Mucosa of descending colon (tissue), 3 donors: ENCODE measurements at regions of chr3 and their contacts with region 1.

Region 1: GRCh38 chr3:193946945-193947344 is 189.0 kb upstream of the HES1 start:
- DNase-seq: no peak
- ATAC-seq: peak; percentile 63
- H3K4me3 ChIP-seq: no peak overlapping the region
- H3K4me1 ChIP-seq: no peaks in the 10 kb centered on the region
- CTCF ChIP-seq: no peak

Region 2: DNA sequence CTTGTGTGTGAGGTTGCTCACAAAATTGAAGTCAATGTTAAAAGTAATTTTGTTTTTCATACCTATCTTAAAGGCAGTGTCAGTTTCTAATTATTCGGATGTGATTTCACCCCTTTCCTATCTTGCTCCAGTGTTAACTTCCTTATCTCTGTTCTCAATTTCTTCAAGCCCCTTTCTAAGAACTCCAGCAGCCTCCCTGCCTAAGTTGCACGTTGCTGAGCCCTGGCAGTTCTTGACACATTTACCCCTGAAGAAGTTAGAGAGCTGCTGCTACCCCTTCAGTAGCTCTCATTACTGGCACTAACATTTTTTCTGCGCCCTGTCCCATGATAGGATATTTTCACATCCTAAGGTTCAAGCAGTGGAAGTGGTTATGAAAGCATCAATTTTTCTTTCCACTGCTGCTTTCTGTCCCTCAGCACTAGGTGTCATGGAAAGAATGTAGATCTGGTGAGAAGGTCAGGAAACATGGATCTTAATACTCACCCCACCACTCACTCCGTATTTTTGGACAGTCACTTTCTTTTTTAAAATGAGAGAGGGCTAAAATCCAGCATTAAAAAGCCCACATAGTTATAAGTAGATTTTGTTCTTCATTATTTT is 291.0 kb before region 1 on chr3:
- intact Hi-C with region 1: no loop called
- DNase-seq: no peak
- ATAC-seq: no peak
- H3K4me3 ChIP-seq: no peak overlapping the region
- H3K4me1 ChIP-seq: no peaks in the 10 kb centered on the region
- CTCF ChIP-seq: no peak

Region 3: DNA sequence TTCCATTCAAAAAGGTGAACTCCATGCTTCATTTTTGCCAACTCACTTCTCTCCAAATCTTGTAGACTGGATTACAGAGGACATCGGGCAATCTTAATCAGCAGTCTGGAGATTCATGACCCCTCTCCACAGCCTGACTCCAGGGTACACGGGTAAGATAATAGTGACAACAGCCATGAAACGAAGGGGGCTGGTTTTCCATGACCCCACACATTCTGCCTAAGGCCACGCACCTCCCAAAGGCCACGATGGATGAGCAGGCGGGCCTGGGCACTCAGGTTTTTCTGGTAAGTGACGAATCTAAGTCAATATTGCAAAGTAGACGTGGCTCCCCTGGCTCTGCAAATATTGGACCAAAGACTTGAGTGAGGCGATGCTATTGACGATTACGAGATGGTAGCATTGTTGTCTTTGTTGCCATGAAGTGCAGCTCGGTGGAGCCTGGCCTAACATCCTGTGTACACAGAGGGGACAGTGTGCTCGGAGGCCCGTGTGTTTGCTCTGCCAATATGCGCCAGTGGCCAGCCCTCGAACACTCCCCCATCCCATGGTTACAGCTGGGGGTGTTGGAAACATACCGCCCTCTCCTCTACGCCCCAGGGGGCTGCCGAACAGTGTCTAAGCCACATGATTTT is 234.9 kb before region 1 on chr3:
- intact Hi-C with region 1: loop called in 1 of 2 experiments (anchors 10 kb)
- DNase-seq: no peak
- ATAC-seq: no peak
- H3K4me3 ChIP-seq: no peak overlapping the region
- H3K4me1 ChIP-seq: no peaks in the 10 kb centered on the region
- CTCF ChIP-seq: no peak

Region 4: DNA sequence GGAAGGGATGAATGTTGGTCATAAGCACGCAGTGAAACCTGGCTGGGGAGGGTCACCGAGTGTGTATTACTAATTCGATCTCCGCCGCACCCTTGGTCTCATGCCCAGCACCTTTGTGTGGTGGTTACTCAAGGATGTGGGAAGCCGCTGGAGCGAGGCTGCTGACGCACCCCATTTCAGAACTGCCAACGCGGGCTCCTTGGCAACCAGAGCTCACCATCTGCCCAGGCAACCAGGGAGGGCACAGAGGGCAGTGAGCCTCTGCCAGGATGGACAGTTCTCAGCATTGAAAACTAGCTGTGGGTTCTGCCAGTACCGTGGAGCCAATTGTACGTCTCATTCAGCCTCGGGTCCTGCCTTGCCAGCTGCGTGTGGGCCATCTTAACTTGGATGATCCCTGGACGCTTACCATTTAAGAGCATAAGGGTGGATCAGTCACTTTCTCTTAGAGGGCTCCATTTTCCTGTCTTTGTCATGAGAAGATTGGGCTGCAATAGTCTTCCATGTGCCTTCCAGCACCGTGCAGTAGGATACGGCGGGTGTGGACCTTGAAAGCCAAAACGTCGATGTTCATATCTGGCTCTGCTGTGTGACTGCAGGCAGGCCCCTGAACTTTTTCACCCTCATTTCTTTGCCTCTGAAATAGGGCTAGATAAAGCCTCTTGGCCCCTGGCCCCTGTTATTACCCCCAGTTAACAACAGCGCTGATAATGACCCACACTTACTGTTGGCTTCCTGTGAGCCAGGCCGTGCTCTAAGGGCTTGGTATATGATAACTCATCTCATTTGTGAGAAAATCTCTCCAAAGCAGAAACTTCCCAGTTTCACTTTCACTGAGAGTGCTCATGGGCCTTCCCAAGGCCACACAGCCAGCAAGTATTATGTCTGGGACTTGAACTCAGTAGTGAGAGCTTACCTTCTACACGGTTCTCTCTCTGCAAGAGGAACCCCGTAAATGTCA is 115.2 kb before region 1 on chr3:
- intact Hi-C with region 1: no loop called
- DNase-seq: no peak
- ATAC-seq: peak; percentile 60
- H3K4me3 ChIP-seq: no peak overlapping the region
- H3K4me1 ChIP-seq: no peaks in the 10 kb centered on the region
- CTCF ChIP-seq: no peak